ENCODE measurements at regions of chr11 and their contacts with region 1.

Region 1: DNA sequence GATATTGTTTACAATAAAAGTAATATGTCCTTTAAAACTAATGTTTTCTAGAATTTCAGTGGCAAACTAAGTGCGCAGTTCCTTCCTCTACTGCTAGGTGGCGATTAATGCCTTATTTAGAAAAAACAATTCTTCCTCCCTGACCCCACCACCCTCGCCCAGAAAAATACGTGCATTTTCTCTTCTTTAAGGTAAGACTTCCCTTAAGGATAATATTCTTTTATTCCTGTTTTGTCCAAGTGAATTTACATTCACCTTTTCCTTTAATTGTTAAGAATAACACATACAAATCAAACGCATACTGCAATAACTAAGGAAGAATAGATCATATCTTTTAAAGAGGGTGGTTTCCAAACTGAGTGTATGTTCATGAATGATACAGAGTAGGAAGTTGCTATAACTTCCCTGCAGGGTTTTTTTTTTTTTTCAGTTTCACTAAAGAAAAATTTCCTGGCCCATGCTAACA is 17.0 kb upstream of the PSMA1 start:
- DNase-seq: no peak
- ATAC-seq: peak; percentile 88
- H3K4me3 Mint-ChIP-seq: peak overlapping the region; percentile 80
- H3K27ac Mint-ChIP-seq: peak overlapping the region; percentile 81
- H3K4me1 Mint-ChIP-seq: peaks cover 9% of the 10 kb centered on the region
- H3K27me3 Mint-ChIP-seq: no peaks in the 10 kb centered on the region
- CTCF ChIP-seq: peak; percentile 86

Region 2: GRCh38 chr11:14422052-14422813 is 114.9 kb before region 1 on chr11:
- CTCF ChIA-PET with region 1: no interaction called
- POLR2A ChIA-PET with region 1: no interaction called
- intact Hi-C with region 1: no loop called
- DNase-seq: no peak
- ATAC-seq: no peak
- H3K4me3 Mint-ChIP-seq: no peak overlapping the region
- H3K27ac Mint-ChIP-seq: no peak overlapping the region
- H3K4me1 Mint-ChIP-seq: peaks cover 4% of the 10 kb centered on the region
- H3K27me3 Mint-ChIP-seq: no peaks in the 10 kb centered on the region
- CTCF ChIP-seq: no peak

Region 3: DNA sequence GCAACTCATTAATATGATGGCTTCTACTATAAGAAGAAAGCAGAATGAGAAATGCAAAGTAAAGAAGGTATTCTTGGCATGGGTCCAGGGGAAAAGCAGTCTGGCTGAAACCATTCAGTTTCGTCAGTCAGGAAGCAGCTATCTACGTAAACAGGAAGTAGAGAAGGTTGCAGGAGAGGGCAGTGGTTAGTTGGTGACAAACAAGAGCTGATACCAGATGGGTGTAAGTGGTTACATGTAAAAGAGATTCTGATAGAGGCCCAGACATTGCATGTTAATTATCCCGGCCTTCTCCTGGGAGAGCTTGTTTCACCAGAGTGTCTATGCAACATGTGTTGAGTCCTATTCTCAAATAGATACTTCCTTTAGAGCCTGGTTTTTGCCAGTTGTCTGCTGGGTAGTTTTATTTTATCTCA is 41.4 kb after region 1 on chr11:
- CTCF ChIA-PET with region 1: no interaction called
- POLR2A ChIA-PET with region 1: no interaction called
- intact Hi-C with region 1: loop called (anchors 5 kb)
- DNase-seq: no peak
- ATAC-seq: peak; percentile 94
- H3K4me3 Mint-ChIP-seq: peak overlapping the region; percentile 50
- H3K27ac Mint-ChIP-seq: peak overlapping the region; percentile 77
- H3K4me1 Mint-ChIP-seq: peaks cover 33% of the 10 kb centered on the region
- H3K27me3 Mint-ChIP-seq: peaks cover 1% of the 10 kb centered on the region
- CTCF ChIP-seq: no peak

Region 4: DNA sequence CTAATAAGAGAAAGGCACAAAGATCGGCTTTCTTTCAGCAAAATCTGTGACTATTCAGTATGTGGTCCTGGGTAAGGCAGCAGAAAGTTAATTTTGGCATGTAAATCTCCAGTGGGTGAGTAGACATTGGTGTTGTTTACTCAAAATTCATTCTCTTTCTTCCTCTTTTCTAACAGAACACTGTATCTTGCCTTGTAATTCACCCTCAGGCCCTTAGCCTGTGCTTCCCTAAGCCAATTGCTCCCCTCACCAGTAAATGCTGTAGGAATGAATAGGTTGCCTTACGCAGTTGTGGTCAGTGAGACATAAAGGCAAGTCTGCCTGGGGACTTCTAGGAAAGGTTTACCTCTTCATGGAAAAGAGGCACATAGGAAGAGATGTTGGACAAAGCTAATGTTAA is 56.5 kb after region 1 on chr11:
- CTCF ChIA-PET with region 1: no interaction called
- POLR2A ChIA-PET with region 1: no interaction called
- intact Hi-C with region 1: no loop called
- DNase-seq: no peak
- ATAC-seq: no peak
- H3K4me3 Mint-ChIP-seq: no peak overlapping the region
- H3K27ac Mint-ChIP-seq: no peak overlapping the region
- H3K4me1 Mint-ChIP-seq: peaks cover 13% of the 10 kb centered on the region
- H3K27me3 Mint-ChIP-seq: peaks cover 8% of the 10 kb centered on the region
- CTCF ChIP-seq: no peak

Region 5: GRCh38 chr11:14643697-14644225 is 106.6 kb after region 1 on chr11 and contains the start of gene PDE3B:
- CTCF ChIA-PET with region 1: interaction called, 6 read pairs
- POLR2A ChIA-PET with region 1: interaction called, 9 read pairs
- intact Hi-C with region 1: loop called (anchors 1 kb)
- DNase-seq: peak; percentile 56
- ATAC-seq: peak; percentile 72
- H3K4me3 Mint-ChIP-seq: peak within 1 kb of the TSS; percentile 86
- H3K27ac Mint-ChIP-seq: no peak within 1 kb of the TSS
- H3K4me1 Mint-ChIP-seq: peaks cover 10% of the 10 kb centered on the region
- H3K27me3 Mint-ChIP-seq: peaks cover 17% of the 10 kb centered on the region
- CTCF ChIP-seq: no peak
- total RNA-seq, gene PDE3B: 11.3 and 13.4 TPM in 2 replicates

Region 6: DNA sequence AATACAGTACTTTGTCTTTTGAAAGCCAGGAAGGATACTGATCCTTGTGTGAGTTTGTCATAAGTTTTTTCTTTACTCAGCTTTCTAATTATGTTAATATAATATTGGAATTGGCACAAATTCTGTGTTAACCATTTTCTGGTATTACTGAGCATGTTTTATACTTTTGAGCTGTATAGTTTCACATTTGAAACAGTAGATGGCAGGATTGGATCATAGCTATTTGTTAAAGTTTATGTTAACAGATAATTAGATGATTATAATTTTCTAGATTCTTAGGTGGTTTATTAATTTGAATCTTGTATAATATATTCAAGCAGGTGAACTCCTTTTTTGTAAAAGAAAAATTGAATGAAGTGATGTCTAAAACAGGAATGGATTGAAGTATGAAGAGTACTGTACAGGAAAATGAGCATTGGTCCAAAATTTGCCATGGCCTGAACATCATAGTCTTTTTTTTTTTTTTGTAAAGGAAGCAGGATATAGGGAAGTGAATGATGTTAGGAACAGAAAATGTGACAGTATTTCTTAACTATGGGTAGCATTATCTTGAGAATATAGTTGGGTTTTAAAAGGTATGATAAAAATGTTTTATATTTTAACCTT is 252.8 kb after region 1 on chr11:
- CTCF ChIA-PET with region 1: interaction called, 3 read pairs
- POLR2A ChIA-PET with region 1: interaction called, 3 read pairs
- intact Hi-C with region 1: loop called (anchors 1 kb)
- DNase-seq: no peak
- ATAC-seq: no peak
- H3K4me3 Mint-ChIP-seq: no peak overlapping the region
- H3K27ac Mint-ChIP-seq: no peak overlapping the region
- H3K4me1 Mint-ChIP-seq: no peaks in the 10 kb centered on the region
- H3K27me3 Mint-ChIP-seq: no peaks in the 10 kb centered on the region
- CTCF ChIP-seq: peak; percentile 33

Region 7: GRCh38 chr11:15006139-15006759 is 469.1 kb after region 1 on chr11:
- CTCF ChIA-PET with region 1: interaction called, 4 read pairs
- POLR2A ChIA-PET with region 1: no interaction called
- intact Hi-C with region 1: loop called (anchors 1 kb)
- DNase-seq: no peak
- ATAC-seq: peak; percentile 42
- H3K4me3 Mint-ChIP-seq: no peak overlapping the region
- H3K27ac Mint-ChIP-seq: no peak overlapping the region
- H3K4me1 Mint-ChIP-seq: no peaks in the 10 kb centered on the region
- H3K27me3 Mint-ChIP-seq: peaks cover 32% of the 10 kb centered on the region
- CTCF ChIP-seq: no peak

Region 8: DNA sequence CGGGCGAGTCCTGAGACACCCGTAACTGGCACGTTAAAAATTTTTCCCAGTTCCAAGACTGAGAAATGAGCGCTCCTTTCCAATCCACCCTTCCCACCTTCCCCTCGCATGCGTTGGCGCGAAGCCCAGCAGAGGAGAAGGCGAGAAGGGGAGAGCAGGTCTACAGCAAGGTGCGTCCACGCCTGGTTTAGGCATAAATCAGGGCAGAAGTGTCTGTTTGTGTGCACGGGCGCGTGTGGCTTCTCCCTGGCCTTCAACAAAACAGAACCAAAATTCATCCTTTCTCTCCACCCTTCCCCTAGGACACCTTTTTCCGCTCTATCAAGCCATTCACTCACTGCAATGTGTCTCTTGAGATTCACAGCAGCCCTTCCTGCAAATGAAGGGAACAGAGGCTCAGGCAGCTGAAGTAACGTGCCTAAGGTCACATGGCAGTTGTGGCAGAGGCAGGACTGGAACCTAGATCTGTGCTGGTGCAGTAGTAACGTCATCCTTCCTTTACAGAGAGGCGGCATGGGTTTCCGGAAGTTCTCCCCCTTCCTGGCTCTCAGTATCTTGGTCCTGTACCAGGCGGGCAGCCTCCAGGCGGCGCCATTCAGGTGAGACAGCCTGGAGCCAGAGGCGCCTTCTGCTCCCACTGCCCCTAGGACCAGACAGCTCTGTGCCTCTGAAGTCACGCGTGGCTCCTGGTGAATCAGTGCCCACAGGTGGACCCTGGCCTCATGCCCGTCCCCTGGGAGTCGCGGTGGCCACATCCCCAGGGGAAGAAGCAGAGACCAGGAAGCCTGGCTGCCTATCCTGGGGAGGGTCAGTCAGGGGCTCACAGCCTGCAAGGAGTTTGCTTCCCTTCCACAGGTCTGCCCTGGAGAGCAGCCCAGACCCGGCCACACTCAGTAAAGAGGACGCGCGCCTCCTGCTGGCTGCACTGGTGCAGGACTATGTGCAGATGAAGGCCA is 537.3 kb after region 1 on chr11:
- CTCF ChIA-PET with region 1: interaction called, 3 read pairs
- POLR2A ChIA-PET with region 1: no interaction called
- intact Hi-C with region 1: loop called (anchors 2 kb)
- DNase-seq: peak; percentile 67
- ATAC-seq: peak; percentile 89
- H3K4me3 Mint-ChIP-seq: peak overlapping the region; percentile 61
- H3K27ac Mint-ChIP-seq: no peak overlapping the region
- H3K4me1 Mint-ChIP-seq: peaks cover 18% of the 10 kb centered on the region
- H3K27me3 Mint-ChIP-seq: peaks cover 34% of the 10 kb centered on the region
- CTCF ChIP-seq: peak; percentile 35